ENCODE measurements at regions of chr20 and their contacts with region 1.

Region 1: GRCh38 chr20:13546497-13547131 is 92.1 kb downstream of the TASP1 start:
- DNase-seq: peak in 2 of 3 donors; percentile 84 to 96
- ATAC-seq: peak; percentile 83
- H3K4me3 ChIP-seq: no peak overlapping the region
- H3K4me1 ChIP-seq: no peaks in the 10 kb centered on the region
- CTCF ChIP-seq: peak; percentile 65

Region 2: DNA sequence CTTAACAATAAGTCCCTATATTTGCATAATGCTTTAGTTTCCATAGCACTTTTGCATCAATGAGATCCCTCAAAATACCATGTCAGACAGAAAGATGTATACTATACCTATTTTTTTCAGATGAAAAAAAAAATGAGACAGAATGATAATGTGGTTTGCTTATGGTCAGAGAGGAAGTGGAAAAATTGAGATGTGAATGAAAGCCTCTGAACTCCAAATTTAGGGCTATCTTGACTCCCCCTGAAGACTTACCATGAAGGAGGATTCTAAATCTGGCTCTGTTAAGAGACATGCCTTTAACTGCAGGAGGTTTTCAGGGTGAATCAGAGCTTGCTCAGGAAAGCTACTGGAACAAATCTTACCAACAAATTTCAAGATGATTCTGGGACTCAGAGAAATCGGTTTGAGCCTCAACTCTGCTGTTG is 149.3 kb before region 1 on chr20:
- intact Hi-C with region 1: loop called in 1 of 2 experiments (anchors 10 kb)
- DNase-seq: no peak
- ATAC-seq: no peak
- H3K4me3 ChIP-seq: no peak overlapping the region
- H3K4me1 ChIP-seq: no peaks in the 10 kb centered on the region
- CTCF ChIP-seq: no peak

Measured in mucosa of descending colon (tissue), 3 donors.